Activated CD4-positive, alpha-beta T cell treated with anti-CD3 and anti-CD28 coated beads, Interleukin-2, amount 10 ng/mL, durations not matched to agents 7 days and 5 days (primary cell): ENCODE measurements at regions of chr1 and their contacts with region 1.

Region 1: GRCh38 chr1:12448746-12449177 is 169.2 kb downstream of the DHRS3 start:
- DNase-seq: no peak
- H3K4me3 Mint-ChIP-seq: peak overlapping the region; percentile 12
- H3K27ac Mint-ChIP-seq: peak overlapping the region; percentile 93
- H3K4me1 Mint-ChIP-seq: peaks cover 76% of the 10 kb centered on the region
- H3K27me3 Mint-ChIP-seq: peaks cover 16% of the 10 kb centered on the region

Region 2: DNA sequence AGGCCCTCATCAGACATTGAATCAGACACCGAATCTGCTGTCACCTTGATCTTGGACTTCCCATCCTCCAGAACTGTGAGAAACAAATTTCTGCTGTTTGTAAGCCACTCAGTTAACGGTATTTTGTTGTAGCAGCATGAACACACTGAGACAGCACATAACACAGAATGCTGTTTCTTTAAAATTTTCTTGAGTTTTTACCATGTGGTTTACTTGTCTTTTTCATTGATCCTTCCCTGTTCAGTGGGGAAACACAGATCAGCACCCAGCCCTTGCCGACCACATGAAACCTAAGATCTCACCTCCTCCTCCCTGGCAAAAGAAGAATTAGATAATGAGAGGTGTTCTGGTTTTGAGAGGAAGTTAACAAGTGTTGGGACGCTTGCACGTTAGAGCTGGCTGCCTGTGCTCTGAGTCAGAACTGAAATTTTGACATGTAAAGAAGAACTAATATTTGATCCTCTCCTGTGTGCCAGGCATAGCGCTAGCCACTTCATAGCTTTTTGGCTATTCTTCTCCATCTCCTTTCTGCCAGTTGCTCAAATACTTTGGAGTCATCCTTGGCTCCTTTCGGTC is 10.3 kb before region 1 on chr1:
- CTCF ChIA-PET with region 1: interaction called, 11 read pairs
- POLR2A ChIA-PET with region 1: interaction called, 4 read pairs
- DNase-seq: peak; percentile 72
- H3K4me3 Mint-ChIP-seq: peak overlapping the region; percentile 26
- H3K27ac Mint-ChIP-seq: peak overlapping the region; percentile 83
- H3K4me1 Mint-ChIP-seq: peaks cover 84% of the 10 kb centered on the region
- H3K27me3 Mint-ChIP-seq: peaks cover 3% of the 10 kb centered on the region